Activated CD8-positive, alpha-beta T cell treated with anti-CD3 and anti-CD28 coated beads for 36 hours (primary cell): ENCODE measurements at regions of chr12 and their contacts with region 1.

Region 1: GRCh38 chr12:47779301-47779942 is 6.4 kb downstream of the SLC48A1 start:
- DNase-seq: peak; percentile 96
- ATAC-seq: peak; percentile 80
- H3K4me3 Mint-ChIP-seq: peak overlapping the region; percentile 7
- H3K27ac Mint-ChIP-seq: peak overlapping the region; percentile 18
- H3K4me1 Mint-ChIP-seq: peaks cover 31% of the 10 kb centered on the region
- H3K27me3 Mint-ChIP-seq: no peaks in the 10 kb centered on the region
- CTCF ChIP-seq: peak; percentile 89

Region 2: DNA sequence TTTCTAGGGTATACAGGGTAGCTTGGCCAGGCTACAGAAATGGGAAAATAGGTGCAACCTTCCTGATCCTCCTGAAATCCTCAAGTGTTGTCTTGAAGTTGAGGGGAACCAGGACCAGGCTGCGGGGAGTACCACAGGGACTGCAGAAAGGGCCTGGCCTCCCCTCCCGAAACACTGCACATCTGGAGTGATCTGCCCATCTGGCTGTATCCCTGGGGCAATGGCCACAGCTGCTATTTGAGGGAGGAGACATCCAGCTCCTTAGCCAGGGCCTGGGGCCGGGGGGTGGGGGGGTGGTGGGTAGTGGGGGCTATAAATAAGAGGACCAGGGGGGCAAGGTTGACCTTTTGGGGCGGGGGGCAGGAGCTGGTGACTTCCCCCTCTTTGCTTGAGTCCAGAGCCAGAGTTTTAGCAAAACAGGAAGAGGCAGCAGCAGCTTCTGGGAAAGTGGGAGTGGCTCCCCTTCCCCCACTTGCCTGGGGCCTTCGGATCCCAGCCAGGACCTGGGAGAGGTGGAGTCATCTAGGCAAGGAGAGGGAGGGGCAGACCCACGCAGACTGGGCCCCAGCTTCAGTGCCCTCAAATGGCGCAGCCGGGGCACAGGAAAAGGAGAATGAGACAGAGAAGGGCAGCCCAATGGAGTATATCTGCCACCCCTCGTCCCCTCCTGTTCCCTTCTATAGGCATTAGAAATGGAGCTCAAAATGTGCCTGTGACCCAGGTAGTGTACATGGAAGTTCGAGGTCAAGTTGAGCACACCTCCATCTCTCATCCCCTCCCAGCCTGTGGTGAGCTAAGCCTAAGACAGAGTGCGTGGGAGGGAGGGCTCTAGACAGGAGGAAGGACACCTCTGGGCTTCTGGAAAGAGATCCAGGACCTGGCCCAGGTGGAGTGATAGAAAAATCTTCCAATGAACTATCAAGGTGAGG is 49.5 kb after region 1 on chr12:
- CTCF ChIA-PET with region 1: interaction called, 164 read pairs
- POLR2A ChIA-PET with region 1: interaction called, 14 read pairs
- intact Hi-C with region 1: no loop called
- DNase-seq: no peak
- ATAC-seq: no peak
- H3K4me3 Mint-ChIP-seq: peak overlapping the region; percentile 56
- H3K27ac Mint-ChIP-seq: peak overlapping the region; percentile 84
- H3K4me1 Mint-ChIP-seq: peaks cover 89% of the 10 kb centered on the region
- H3K27me3 Mint-ChIP-seq: no peaks in the 10 kb centered on the region
- CTCF ChIP-seq: no peak

Region 3: DNA sequence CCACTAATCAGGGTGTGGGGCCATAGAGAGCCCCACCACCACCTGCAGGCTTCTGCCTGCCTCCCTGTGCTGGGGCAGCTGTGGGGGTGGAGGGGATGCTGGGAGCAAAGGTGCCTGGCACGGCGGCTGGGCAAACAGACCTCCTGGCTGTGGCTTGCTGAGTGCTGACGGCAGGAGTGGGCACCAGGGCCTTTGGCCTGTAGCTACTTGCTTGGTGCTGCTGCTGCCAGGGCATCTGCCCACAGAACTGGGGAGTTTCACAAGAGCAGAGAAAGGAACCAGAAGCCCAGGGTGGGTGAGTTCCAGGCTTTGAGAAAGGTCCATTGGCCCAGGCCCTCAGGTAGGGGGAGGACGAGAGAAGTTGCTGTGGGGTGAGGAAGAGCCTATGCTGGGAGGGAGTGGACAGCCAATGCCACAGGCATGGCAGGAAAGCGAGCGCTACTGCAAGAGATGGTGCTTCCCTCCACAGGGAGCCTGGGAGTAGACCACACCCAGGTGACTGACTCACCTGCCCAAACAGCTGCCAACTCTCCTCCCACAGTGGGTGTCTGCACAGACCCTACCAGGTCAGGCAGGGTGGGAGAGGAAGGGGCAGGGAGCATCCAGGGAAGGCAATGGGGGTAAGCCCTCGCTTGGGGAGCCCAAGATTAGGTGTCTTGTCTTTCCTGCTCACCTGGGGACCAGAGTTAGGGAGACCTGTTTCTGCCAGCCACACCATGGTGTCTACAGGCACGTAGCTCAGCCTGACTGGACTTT is 79.3 kb after region 1 on chr12:
- CTCF ChIA-PET with region 1: no interaction called
- POLR2A ChIA-PET with region 1: no interaction called
- intact Hi-C with region 1: no loop called
- DNase-seq: no peak
- ATAC-seq: no peak
- H3K4me3 Mint-ChIP-seq: no peak overlapping the region
- H3K27ac Mint-ChIP-seq: peak overlapping the region; percentile 98
- H3K4me1 Mint-ChIP-seq: peaks cover 50% of the 10 kb centered on the region
- H3K27me3 Mint-ChIP-seq: no peaks in the 10 kb centered on the region
- CTCF ChIP-seq: no peak

Region 4: GRCh38 chr12:47870175-47870781 is 90.9 kb after region 1 on chr12:
- CTCF ChIA-PET with region 1: no interaction called
- POLR2A ChIA-PET with region 1: no interaction called
- intact Hi-C with region 1: no loop called
- DNase-seq: no peak
- ATAC-seq: no peak
- H3K4me3 Mint-ChIP-seq: no peak overlapping the region
- H3K27ac Mint-ChIP-seq: peak overlapping the region; percentile 59
- H3K4me1 Mint-ChIP-seq: peaks cover 48% of the 10 kb centered on the region
- H3K27me3 Mint-ChIP-seq: no peaks in the 10 kb centered on the region
- CTCF ChIP-seq: peak; percentile 49